ENCODE measurements at regions of chr14 and their contacts with region 1.

Region 1: GRCh38 chr14:34722717-34723545 is 8.5 kb upstream of the CFL2 start:
- DNase-seq: peak in 2 of 6 donors; percentile 5 to 48
- ATAC-seq: peak; percentile 53 to 87 (median 84)
- H3K4me3 ChIP-seq: no peak overlapping the region
- H3K27ac ChIP-seq: no peak overlapping the region
- H3K4me1 ChIP-seq: no peaks in the 10 kb centered on the region
- H3K27me3 ChIP-seq: no peaks in the 10 kb centered on the region
- CTCF ChIP-seq: peak; percentile 62 to 74 (median 70)

Region 2: DNA sequence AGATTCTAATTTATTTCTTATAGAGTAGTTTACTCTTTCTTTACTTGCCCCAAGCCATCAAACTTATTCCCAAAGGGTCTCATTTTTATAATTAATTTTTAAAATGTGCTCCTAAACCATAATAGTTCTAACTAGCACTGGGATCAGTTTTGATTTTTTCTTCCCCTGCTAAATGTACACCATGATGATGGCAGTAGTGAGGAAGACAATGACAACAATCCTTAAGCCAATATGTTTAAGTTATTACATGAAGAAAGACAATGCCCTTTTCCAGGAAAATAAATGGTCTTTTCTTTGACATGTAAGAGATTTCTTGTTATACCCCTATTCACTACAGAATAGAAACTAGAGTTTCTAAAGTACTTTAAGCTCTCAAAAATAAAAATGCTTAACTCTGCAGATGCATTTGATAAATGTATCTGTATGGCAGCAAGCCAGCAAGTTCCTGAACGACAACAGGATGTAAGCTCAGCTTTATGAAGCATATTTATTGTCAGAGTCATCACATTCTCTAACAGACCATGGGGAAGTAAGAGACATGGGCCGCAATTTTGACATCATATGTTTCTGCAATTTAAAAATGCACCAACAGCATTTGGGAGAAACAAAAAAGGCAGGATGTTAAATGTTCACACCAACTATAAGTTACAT is 57.0 kb before region 1 on chr14:
- intact Hi-C with region 1: loop called in 1 of 3 experiments (anchors 5 kb)
- DNase-seq: peak in 1 of 6 donors; percentile 41
- ATAC-seq: peak in 2 of 4 donors; percentile 66 to 67
- H3K4me3 ChIP-seq: no peak overlapping the region
- H3K27ac ChIP-seq: peak overlapping the region in 1 of 4 donors; percentile 30
- H3K4me1 ChIP-seq: no peaks in the 10 kb centered on the region
- H3K27me3 ChIP-seq: no peaks in the 10 kb centered on the region
- CTCF ChIP-seq: no peak

Measured in pancreas (tissue), 10 donors.